ENCODE measurements at regions of chr6 and their contacts with region 1.

Region 1: GRCh38 chr6:47631269-47631772 is 67.1 kb upstream of the ADGRF4 start:
- DNase-seq: peak; percentile 32
- ATAC-seq: peak; percentile 79
- H3K4me3 ChIP-seq: no peak overlapping the region
- H3K27ac ChIP-seq: no peak overlapping the region
- H3K4me1 ChIP-seq: no peaks in the 10 kb centered on the region
- H3K27me3 ChIP-seq: no peaks in the 10 kb centered on the region
- CTCF ChIP-seq: peak; percentile 31 to 57 (median 41); a peak in 4 of 6 replicates
- EP300 ChIP-seq: no peak
- POLR2A ChIP-seq: no peak
- RAD21 ChIP-seq: peak; percentile 87

Region 2: DNA sequence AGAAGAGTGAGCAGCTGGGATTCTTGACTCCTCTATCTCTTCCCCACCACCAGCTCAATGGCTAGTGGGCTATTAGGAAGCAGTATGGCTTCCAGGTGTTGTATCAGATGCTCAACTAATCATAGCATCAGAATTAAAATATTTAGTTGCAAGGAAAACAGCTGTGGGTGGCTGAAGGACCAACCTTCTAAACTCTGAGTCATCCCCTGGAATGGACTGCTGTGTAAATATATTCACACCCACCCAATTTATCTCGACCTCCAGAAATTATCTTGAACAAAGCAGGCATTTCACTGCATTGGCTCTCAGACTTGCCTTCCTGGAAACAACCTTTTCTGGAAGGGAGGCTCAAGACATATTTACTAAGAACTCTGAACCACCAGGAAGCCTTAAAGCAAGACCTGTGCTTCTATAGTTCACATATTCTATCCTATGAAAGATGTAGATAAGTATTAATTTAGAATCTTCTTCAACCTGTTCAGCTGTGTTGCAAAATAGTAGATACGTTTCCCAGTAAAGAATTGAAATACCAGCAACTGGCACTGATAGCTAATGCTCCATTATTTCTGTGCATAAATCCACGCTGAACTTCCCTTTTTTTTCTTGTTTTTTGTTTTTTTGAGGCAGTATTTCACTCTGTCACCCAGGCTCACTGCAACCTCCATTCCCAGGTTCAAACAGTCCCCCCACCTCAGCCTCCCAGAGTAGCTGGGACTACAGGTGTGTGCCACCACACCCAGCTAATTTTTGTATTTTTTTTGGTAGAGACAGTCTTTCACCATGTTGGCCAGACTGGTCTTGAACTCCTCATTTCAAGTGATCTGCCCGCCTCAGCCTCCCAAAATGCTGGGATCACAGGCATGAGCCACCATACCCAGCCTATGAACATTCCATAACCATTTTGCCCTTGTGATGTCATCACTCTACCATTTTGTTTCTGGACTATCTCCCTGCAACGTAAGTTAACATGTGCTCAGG is 210.6 kb before region 1 on chr6:
- CTCF ChIA-PET with region 1: interaction called, 84 read pairs
- POLR2A ChIA-PET with region 1: interaction called, 4 read pairs
- RAD21 ChIA-PET with region 1: interaction called, 6 read pairs
- SMC1A ChIA-PET with region 1: interaction called, 48 read pairs
- in situ Hi-C with region 1: loop called (anchors 10 kb)
- intact Hi-C with region 1: no loop called
- DNase-seq: no peak
- ATAC-seq: no peak
- H3K4me3 ChIP-seq: no peak overlapping the region
- H3K27ac ChIP-seq: no peak overlapping the region
- H3K4me1 ChIP-seq: no peaks in the 10 kb centered on the region
- H3K27me3 ChIP-seq: no peaks in the 10 kb centered on the region
- CTCF ChIP-seq: no peak
- EP300 ChIP-seq: no peak
- POLR2A ChIP-seq: no peak
- RAD21 ChIP-seq: no peak

Region 3: GRCh38 chr6:47722194-47722593 is 90.9 kb after region 1 on chr6:
- CTCF ChIA-PET with region 1: interaction called, 12 read pairs
- POLR2A ChIA-PET with region 1: no interaction called
- RAD21 ChIA-PET with region 1: interaction called, 6 read pairs
- SMC1A ChIA-PET with region 1: interaction called, 9 read pairs
- in situ Hi-C with region 1: no loop called
- intact Hi-C with region 1: no loop called
- DNase-seq: peak; percentile 55
- ATAC-seq: peak; percentile 94
- H3K4me3 ChIP-seq: no peak overlapping the region
- H3K27ac ChIP-seq: no peak overlapping the region
- H3K4me1 ChIP-seq: peaks cover 5% of the 10 kb centered on the region; the same call in 1 of the 2 replicates
- H3K27me3 ChIP-seq: no peaks in the 10 kb centered on the region
- CTCF ChIP-seq: no peak
- EP300 ChIP-seq: no peak
- POLR2A ChIP-seq: no peak
- RAD21 ChIP-seq: no peak

Region 4: DNA sequence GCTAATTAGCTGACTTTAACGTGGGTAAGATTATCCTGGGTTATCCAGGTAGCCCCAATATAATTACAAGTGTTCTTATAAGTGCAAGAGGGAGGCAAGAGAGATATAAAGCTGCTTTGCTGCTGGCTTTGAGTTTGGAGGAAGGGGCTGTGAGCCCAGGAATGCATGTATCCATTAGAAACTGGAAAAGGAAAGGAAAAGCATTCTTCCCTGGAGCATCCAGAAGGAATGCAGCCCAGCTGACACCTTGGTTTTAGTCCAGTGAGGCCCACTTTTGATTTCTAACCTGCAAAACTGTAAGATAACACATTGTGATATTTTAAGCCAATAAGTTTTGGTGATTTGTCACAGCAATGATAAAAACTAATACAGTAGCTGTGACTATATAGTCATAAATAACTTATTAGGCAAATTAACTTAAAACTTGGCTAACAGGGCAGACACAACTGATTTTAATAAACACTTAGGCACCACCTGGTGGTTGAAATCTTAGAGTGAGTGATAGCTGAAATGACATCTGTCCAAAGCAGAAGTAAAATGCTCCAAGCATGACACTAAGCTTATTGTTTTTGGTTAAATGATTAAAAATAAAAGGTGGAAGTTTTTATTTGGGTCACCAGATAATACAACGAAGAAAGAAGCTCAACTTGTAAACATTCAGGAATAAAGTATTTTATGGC is 102.7 kb after region 1 on chr6:
- CTCF ChIA-PET with region 1: interaction called, 154 read pairs
- POLR2A ChIA-PET with region 1: interaction called, 9 read pairs
- RAD21 ChIA-PET with region 1: interaction called, 114 read pairs
- SMC1A ChIA-PET with region 1: interaction called, 184 read pairs
- in situ Hi-C with region 1: loop called (anchors 5 kb)
- intact Hi-C with region 1: loop called (anchors 1 kb)
- DNase-seq: peak; percentile 7
- ATAC-seq: peak; percentile 85
- H3K4me3 ChIP-seq: no peak overlapping the region
- H3K27ac ChIP-seq: no peak overlapping the region
- H3K4me1 ChIP-seq: no peaks in the 10 kb centered on the region
- H3K27me3 ChIP-seq: no peaks in the 10 kb centered on the region
- CTCF ChIP-seq: peak; percentile 33 to 64 (median 51); a peak in 5 of 6 replicates
- EP300 ChIP-seq: no peak
- POLR2A ChIP-seq: no peak
- RAD21 ChIP-seq: peak; percentile 83

Region 5: GRCh38 chr6:47787620-47788497 is 156.5 kb after region 1 on chr6:
- CTCF ChIA-PET with region 1: interaction called, 117 read pairs
- POLR2A ChIA-PET with region 1: no interaction called
- RAD21 ChIA-PET with region 1: interaction called, 19 read pairs
- SMC1A ChIA-PET with region 1: interaction called, 9 read pairs
- in situ Hi-C with region 1: loop called (anchors 5 kb)
- intact Hi-C with region 1: no loop called
- DNase-seq: no peak
- ATAC-seq: peak; percentile 96
- H3K4me3 ChIP-seq: no peak overlapping the region
- H3K27ac ChIP-seq: no peak overlapping the region
- H3K4me1 ChIP-seq: no peaks in the 10 kb centered on the region
- H3K27me3 ChIP-seq: peaks cover 0 to 2% of the 10 kb centered on the region in 2 experiments; a peak in 1 of 4 replicates
- CTCF ChIP-seq: peak; percentile 88 to 94 (median 93); a peak in 5 of 6 replicates
- EP300 ChIP-seq: no peak
- POLR2A ChIP-seq: no peak
- RAD21 ChIP-seq: peak; percentile 92

Measured in GM12878 (cell line).